Activated CD8-positive, alpha-beta memory T cell treated with anti-CD3 and anti-CD28 coated beads, Interleukin-2, amount 10 ng/mL, durations not matched to agents 7 days and 5 days (primary cell): ENCODE measurements at regions of chr19 and their contacts with region 1.

Region 1: DNA sequence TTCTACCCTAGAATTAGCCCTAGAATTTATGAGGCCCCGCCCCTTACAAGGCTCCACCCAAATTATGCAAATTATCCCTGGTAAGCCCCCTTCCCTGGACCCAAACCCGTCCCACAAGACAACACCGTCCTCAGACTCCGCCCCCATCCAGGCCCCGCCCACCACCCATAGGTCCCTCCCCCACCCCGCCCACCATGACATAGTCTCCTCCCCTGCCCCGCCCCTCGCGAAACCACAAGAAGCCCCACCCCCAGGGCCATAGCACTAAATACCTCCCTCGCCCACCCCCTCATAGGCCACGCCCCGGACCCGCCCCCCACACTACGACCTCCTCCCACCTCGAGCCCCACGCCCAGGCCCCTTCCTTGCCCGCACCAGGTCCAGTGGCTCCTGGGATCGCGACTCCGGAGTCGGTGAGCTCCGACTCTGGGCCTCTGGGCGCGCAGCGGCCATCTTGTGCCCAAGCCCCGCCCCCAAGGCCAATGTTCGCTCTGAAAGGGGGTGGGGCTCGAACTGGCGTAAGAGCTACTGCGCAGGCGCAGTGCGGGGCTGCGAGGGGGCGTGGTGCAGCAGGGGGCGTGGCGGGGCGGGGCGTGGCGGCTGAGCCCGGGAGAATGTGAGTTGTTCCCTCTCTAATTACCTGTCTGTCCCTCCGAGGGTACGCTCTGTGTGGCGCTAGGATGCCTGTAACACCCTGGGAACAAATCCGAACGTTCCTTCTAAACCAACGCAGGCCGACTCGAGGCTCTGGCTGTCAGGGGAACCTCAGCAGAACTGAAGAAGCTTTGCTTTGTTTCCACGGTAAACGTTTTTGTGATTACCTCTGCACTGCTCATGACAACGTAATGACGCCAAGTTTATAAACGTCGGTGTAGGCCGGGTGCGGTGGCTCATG is at the start of gene ZNF784:
- DNase-seq: peak; percentile 95
- ATAC-seq: peak; percentile 73
- H3K4me3 Mint-ChIP-seq: peak within 1 kb of the TSS; percentile 77
- H3K27ac Mint-ChIP-seq: peak within 1 kb of the TSS; percentile 93
- H3K4me1 Mint-ChIP-seq: peaks cover 58% of the 10 kb centered on the region
- H3K27me3 Mint-ChIP-seq: peaks cover 10% of the 10 kb centered on the region
- total RNA-seq, gene ZNF784: 5.1 to 7.3 TPM

Region 2: DNA sequence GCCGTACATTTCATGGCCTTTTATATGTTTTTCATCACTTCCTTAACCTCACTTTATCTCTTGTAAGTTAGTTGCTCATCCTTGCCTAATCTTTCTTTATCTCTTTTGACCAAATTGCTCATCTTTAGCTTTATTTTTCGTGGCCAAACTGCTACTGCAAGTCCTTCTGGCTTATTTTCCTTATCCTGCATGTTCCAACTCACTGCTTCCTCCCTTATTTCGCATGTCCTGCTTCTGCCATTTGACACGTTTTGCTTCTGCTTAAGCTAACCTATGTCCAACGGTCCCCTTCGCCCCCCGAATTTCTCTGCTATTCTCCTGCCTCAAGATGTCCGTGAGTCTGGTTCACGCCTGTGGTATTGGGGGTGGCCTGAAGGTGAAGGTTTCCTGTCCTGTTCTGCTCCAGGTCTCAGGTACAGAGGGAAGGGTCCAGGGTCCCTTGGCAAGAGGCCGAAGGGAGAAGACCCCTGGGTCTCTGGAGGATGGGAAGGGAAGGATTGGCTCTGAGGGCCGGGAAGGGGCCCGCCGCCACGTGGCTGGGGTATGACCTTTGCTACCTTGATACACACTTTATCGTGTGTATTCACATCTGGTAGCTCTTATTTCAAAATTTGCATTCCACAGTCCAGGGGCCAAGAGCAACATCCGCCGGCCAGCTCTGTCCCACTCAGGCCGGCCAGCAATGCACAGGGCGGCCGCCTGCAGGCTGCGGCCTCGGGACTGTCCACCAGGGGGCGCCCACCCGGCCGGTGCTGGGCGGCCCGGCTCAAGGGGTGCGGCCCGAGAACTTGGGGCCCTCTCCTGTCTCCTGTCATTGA is 156.9 kb before region 1 on chr19:
- CTCF ChIA-PET with region 1: interaction called, 10 read pairs
- DNase-seq: peak; percentile 74
- ATAC-seq: peak; percentile 96
- H3K4me3 Mint-ChIP-seq: no peak overlapping the region
- H3K27ac Mint-ChIP-seq: no peak overlapping the region
- H3K4me1 Mint-ChIP-seq: peaks cover 3% of the 10 kb centered on the region
- H3K27me3 Mint-ChIP-seq: peaks cover 2% of the 10 kb centered on the region

Region 3: GRCh38 chr19:55516878-55517620 is 107.3 kb before region 1 on chr19:
- CTCF ChIA-PET with region 1: interaction called, 12 read pairs
- DNase-seq: peak; percentile 92
- ATAC-seq: peak; percentile 100
- H3K4me3 Mint-ChIP-seq: peak overlapping the region; percentile 54
- H3K27ac Mint-ChIP-seq: peak overlapping the region; percentile 71
- H3K4me1 Mint-ChIP-seq: peaks cover 3% of the 10 kb centered on the region
- H3K27me3 Mint-ChIP-seq: peaks cover 6% of the 10 kb centered on the region

Region 4: GRCh38 chr19:55605207-55605636 is 19.1 kb before region 1 on chr19:
- CTCF ChIA-PET with region 1: interaction called, 44 read pairs
- DNase-seq: peak; percentile 99
- ATAC-seq: peak; percentile 86
- H3K4me3 Mint-ChIP-seq: peak overlapping the region; percentile 81
- H3K27ac Mint-ChIP-seq: peak overlapping the region; percentile 92
- H3K4me1 Mint-ChIP-seq: peaks cover 50% of the 10 kb centered on the region
- H3K27me3 Mint-ChIP-seq: no peaks in the 10 kb centered on the region

Region 5: DNA sequence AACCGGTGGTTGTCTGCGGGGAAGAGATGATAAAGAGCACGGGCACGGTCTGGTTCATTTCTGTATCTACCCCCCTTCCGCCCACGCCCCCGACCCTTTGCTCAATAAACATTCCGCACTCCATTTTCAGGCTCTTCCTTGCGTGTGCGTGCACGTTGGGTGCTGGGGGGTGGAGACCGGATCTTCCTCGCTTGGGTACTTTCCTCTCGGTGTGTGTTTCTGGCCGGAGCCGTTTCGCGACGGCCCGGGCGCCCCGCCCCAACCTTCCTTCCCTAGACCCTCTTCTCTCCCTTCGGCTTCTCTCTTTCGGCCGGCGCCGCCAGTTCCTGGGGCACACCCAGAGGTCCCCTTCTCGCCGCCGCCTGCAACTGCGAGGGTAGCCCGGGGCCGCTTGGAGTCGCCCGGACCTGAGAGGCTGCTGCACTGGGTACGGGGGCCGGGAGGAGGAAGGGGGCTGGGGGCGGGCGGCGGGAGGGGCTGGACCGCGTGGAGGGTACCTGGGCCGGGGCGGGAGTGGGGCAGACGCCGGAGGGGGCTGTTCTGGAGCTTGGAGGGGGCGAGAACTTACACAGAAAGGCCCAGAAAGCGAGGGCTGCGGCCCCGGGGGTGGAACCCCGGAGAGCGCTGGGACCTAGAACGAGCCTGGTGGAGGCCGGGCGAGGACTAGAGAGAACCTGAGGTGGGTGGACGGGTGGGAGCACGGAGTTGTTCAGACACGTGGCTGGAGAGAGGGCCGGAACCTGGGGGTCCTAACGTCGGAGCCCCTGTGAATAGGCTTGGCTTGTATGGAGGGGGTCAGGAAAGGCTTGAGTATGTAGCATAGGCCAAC is 19.2 kb after region 1 on chr19 and contains the start of gene ZNF581:
- CTCF ChIA-PET with region 1: interaction called, 14 read pairs
- DNase-seq: peak; percentile 85
- ATAC-seq: peak; percentile 66
- H3K4me3 Mint-ChIP-seq: peak within 1 kb of the TSS; percentile 87
- H3K27ac Mint-ChIP-seq: peak within 1 kb of the TSS; percentile 95
- H3K4me1 Mint-ChIP-seq: peaks cover 47% of the 10 kb centered on the region
- H3K27me3 Mint-ChIP-seq: no peaks in the 10 kb centered on the region
- total RNA-seq, gene ZNF581: 23.7 to 25.4 TPM

Region 6: DNA sequence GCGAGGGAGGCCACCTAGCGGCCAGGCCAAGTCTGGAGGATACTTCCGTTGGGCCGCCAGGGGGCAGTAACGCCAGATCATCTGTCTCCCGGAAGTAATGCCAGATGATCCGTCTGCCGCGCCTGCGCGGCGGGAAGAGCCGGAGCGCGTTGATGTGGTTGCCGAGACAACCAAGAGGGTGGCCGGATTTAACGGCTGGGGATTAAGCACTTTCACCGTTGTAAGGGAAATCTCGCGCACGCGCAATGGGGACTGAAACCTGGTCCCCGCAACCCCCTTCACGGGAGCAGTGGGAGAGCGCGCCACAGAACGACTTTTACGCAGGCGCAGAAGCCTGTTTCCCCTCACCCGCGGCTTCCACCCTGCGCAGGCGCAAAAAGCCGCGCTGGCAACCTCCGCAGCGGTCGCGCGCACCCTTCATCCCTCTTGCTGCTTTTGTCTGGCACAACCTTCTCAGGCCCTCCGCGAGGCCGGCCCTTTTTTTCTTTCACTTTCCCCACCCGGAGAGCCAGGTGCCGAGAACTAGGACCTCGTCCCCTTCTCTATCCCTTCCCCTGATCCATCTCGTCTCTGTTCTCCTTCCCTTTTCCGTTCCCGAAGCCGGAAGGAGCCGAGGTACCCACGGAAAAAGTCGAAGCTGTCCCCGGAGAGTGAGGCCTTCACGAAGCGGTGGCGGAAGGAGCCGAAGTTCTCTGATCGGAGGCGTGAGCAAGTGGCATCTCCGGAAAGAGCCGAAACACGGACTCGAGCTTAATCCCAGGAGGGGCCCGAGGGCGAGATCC is 29.6 kb after region 1 on chr19:
- CTCF ChIA-PET with region 1: interaction called, 22 read pairs
- DNase-seq: peak; percentile 100
- ATAC-seq: peak; percentile 81
- H3K4me3 Mint-ChIP-seq: peak overlapping the region; percentile 88
- H3K27ac Mint-ChIP-seq: peak overlapping the region; percentile 95
- H3K4me1 Mint-ChIP-seq: peaks cover 35% of the 10 kb centered on the region
- H3K27me3 Mint-ChIP-seq: no peaks in the 10 kb centered on the region

Region 7: DNA sequence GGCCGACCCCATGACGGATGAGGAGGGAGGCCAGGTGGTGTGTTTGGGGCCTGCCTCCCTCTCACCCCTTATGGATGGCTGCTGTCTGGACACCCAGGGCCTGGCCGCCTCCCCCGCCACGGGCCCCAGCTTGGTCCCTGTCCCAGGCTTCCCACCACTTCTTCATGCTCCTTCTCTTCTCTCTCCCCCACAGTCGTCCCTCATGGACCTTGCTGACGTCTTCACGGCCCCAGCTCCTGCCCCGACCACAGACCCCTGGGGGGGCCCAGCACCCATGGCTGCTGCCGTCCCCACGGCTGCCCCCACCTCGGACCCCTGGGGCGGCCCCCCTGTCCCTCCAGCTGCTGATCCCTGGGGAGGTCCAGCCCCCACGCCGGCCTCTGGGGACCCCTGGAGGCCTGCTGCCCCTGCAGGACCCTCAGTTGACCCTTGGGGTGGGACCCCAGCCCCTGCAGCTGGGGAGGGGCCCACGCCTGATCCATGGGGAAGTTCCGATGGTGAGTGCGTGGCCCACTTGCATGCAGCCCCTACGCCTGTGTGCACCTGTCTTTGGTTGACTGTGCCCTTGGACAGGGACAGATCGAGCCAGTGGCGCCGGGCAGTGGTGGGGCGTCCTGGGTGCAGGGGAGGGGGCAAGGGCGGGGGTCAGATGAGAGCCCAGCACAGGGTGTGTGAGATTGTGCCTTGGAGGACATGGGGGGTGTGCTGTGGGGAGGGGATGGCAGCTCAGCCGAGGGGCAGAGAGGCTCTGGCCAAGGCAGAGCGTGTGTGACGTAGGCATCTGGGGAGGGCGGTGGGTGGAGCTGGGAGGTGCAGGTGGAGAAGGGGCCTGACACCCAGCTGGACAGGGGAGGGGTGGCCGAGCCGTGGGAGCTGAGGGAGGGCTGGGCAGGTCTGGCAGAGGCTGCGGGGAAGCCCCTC is 67.5 kb after region 1 on chr19:
- CTCF ChIA-PET with region 1: no interaction called
- DNase-seq: no peak
- ATAC-seq: no peak
- H3K4me3 Mint-ChIP-seq: no peak overlapping the region
- H3K27ac Mint-ChIP-seq: no peak overlapping the region
- H3K4me1 Mint-ChIP-seq: no peaks in the 10 kb centered on the region
- H3K27me3 Mint-ChIP-seq: no peaks in the 10 kb centered on the region

Region 8: GRCh38 chr19:55720214-55720746 is 95.9 kb after region 1 on chr19:
- CTCF ChIA-PET with region 1: no interaction called
- DNase-seq: no peak
- ATAC-seq: no peak
- H3K4me3 Mint-ChIP-seq: no peak overlapping the region
- H3K27ac Mint-ChIP-seq: no peak overlapping the region
- H3K4me1 Mint-ChIP-seq: no peaks in the 10 kb centered on the region
- H3K27me3 Mint-ChIP-seq: peaks cover 6% of the 10 kb centered on the region